ENCODE measurements at regions of chr3 and their contacts with region 1.

Region 1: DNA sequence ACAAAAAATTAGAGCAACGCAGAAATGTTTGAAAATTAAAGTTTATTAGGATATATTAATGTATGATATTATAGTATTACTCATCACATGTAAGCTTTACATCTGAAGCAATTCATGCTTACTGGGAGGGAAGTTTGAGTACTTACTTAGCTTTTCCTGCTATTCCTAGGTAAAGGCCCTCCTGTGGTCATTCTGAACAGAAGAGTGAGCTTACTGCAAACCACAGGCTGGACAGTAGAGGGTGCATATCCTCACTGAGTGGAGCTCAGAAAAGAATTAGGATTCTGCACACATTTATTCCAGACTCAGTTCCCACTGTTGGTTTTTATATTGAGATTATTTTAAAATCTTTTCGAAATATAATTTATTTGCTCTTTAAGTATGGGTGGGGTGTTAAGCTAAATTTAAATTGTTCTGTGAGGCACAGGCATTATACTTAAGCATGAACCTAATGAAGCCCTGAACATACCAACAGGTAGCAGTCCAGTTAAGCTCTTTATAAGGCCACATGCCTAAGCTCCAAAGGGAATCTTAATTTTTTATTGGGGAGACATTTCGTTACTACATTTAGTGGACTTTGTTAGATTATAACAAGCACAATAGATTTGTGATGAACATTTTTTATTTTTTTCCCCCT is 10.2 kb downstream of the MRPS22 start:
- DNase-seq: no peak
- H3K4me3 ChIP-seq: no peak overlapping the region
- H3K27ac ChIP-seq: no peak overlapping the region
- H3K4me1 ChIP-seq: no peaks in the 10 kb centered on the region
- H3K27me3 ChIP-seq: no peaks in the 10 kb centered on the region
- CTCF ChIP-seq: peak; percentile 42

Region 2: GRCh38 chr3:139389458-139390209 is 35.6 kb after region 1 on chr3 and contains the start of gene COPB2:
- intact Hi-C with region 1: loop called (anchors 5 kb)
- DNase-seq: peak; percentile 100
- H3K4me3 ChIP-seq: peak within 1 kb of the TSS; percentile 94
- H3K27ac ChIP-seq: peak within 1 kb of the TSS; percentile 96
- H3K4me1 ChIP-seq: peaks cover 5% of the 10 kb centered on the region
- H3K27me3 ChIP-seq: no peaks in the 10 kb centered on the region
- CTCF ChIP-seq: no peak
- total RNA-seq, gene COPB2: 153 to 162 TPM

Region 3: GRCh38 chr3:139705631-139706030 is 351.6 kb after region 1 on chr3:
- intact Hi-C with region 1: no loop called
- DNase-seq: no peak
- H3K4me3 ChIP-seq: no peak overlapping the region
- H3K27ac ChIP-seq: no peak overlapping the region
- H3K4me1 ChIP-seq: no peaks in the 10 kb centered on the region
- H3K27me3 ChIP-seq: no peaks in the 10 kb centered on the region
- CTCF ChIP-seq: no peak